ENCODE measurements at regions of chr2 and their contacts with region 1.

Region 1: GRCh38 chr2:119823734-119824334 is 64.1 kb downstream of the PTPN4 start:
- DNase-seq: peak; percentile 44
- H3K4me3 ChIP-seq: no peak overlapping the region
- H3K27ac ChIP-seq: no peak overlapping the region
- H3K4me1 ChIP-seq: peaks cover 2 to 10% of the 10 kb centered on the region in 2 experiments; a peak in 3 of 4 replicates
- H3K27me3 ChIP-seq: no peaks in the 10 kb centered on the region
- CTCF ChIP-seq: peak; percentile 79
- EP300 ChIP-seq: no peak
- RAD21 ChIP-seq: peak; percentile 76

Region 2: GRCh38 chr2:119746836-119747686 is 76.8 kb before region 1 on chr2:
- CTCF ChIA-PET with region 1: interaction called, 10 read pairs
- POLR2A ChIA-PET with region 1: no interaction called
- DNase-seq: no peak
- H3K4me3 ChIP-seq: no peak overlapping the region
- H3K27ac ChIP-seq: peak overlapping the region in 1 of 2 experiments; percentile 10; a peak in 1 of 4 replicates
- H3K4me1 ChIP-seq: peaks cover 4 to 27% of the 10 kb centered on the region in 2 experiments
- H3K27me3 ChIP-seq: no peaks in the 10 kb centered on the region
- CTCF ChIP-seq: no peak
- EP300 ChIP-seq: peak in 1 of 2 experiments; percentile 25; a peak in 1 of 4 replicates
- RAD21 ChIP-seq: no peak

Region 3: DNA sequence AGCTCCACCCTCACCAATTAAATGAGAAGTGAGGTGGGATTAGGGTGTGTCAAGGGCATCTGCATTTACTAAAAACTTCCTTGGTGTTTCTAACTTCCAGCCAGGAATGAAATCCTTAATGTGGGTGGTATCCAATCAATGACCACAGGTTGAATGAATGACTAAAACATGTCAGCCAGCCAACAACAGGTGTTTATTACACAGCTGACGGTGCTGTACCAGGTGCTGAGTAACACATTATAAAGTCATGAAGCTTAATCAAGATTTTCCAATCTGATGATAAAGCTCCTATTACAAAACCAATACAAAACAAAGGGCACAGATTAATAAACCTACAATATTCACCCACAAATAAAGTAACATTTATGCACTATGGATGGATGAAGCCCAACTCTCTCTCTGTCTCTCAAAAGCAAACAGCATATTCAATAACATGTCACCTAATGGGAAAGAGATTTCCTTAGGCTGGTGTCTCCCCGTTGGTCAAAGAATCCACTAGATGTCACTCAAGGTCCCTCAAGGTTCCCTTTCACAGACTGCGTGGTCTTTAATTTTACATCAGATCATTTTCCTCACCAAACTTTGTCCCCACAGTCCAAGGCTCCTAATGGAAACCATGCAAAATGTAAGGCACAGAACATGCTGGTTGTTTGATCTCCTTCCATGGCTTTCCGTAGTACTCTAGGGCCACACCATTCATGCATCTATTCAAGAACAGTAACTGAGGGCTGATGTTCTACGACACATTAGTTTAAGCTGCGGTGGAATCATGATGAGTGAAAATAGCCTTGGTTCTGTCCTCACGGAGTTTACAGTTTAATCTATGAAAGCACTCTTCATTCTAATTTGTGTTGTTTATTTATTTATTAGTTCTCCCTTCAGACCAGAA is 70.5 kb before region 1 on chr2:
- CTCF ChIA-PET with region 1: interaction called, 12 read pairs
- POLR2A ChIA-PET with region 1: no interaction called
- DNase-seq: peak; percentile 56
- H3K4me3 ChIP-seq: no peak overlapping the region; a peak in 1 of 4 replicates
- H3K27ac ChIP-seq: no peak overlapping the region
- H3K4me1 ChIP-seq: peaks cover 0 to 22% of the 10 kb centered on the region in 2 experiments; a peak in 3 of 4 replicates
- H3K27me3 ChIP-seq: no peaks in the 10 kb centered on the region
- CTCF ChIP-seq: peak; percentile 73
- EP300 ChIP-seq: no peak
- RAD21 ChIP-seq: peak; percentile 87

Region 4: DNA sequence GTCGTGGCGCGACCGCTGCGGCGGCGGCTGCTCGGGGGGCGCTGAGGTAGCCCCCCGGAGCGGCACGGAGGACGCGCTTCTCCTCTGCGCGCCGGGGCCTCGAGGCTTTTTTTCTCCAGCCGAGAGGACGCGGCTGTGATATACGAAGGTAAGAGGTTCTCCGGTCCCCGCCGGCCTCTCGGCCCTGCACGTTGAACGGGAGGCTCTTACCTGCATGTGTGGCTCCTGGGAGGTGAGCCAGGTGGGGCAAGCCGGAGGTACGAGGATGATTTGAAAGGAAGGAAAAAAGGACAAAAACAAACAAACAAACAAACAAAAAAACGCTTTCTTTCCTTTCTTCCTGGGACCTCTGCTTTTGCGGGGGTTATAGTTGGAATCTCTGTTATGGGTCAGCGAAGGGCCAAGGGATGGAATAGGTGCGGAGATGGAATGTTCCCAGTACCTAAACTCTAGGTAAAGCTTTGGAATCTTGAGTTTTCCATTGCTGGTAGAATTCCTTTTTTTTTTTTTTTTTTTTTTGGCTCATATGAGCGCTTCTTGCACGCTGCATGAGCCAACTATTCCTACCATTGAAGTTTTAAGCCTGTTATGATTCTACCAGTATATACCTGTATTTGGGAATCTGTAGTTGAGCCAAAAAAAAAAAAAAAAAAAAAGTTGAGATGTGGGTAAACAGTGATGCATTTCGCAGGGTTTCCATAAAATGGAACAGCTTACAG is 63.4 kb before region 1 on chr2:
- CTCF ChIA-PET with region 1: interaction called, 11 read pairs
- POLR2A ChIA-PET with region 1: no interaction called
- DNase-seq: no peak
- H3K4me3 ChIP-seq: peak overlapping the region; percentile 92 to 95
- H3K27ac ChIP-seq: peak overlapping the region; percentile 82 to 99
- H3K4me1 ChIP-seq: peaks cover 6% of the 10 kb centered on the region in 2 experiments
- H3K27me3 ChIP-seq: no peaks in the 10 kb centered on the region
- CTCF ChIP-seq: no peak
- EP300 ChIP-seq: no peak
- RAD21 ChIP-seq: no peak

Region 5: GRCh38 chr2:119921825-119922224 is 98.0 kb after region 1 on chr2:
- CTCF ChIA-PET with region 1: no interaction called
- POLR2A ChIA-PET with region 1: no interaction called
- DNase-seq: no peak
- H3K4me3 ChIP-seq: no peak overlapping the region
- H3K27ac ChIP-seq: no peak overlapping the region
- H3K4me1 ChIP-seq: no peaks in the 10 kb centered on the region
- H3K27me3 ChIP-seq: no peaks in the 10 kb centered on the region
- CTCF ChIP-seq: no peak
- EP300 ChIP-seq: no peak
- RAD21 ChIP-seq: no peak

Measured in SK-N-SH (cell line).